Right ventricle myocardium superior (tissue), 1 donor: ENCODE measurements at regions of chr5 and their contacts with region 1.

Region 1: GRCh38 chr5:157718519-157718918 is 12.7 kb upstream of the THG1L start:
- DNase-seq: no peak
- ATAC-seq: peak; percentile 98

Region 2: GRCh38 chr5:157431544-157432200 is 286.8 kb before region 1 on chr5:
- intact Hi-C with region 1: loop called (anchors 5 kb)
- DNase-seq: no peak
- ATAC-seq: peak; percentile 85

Region 3: DNA sequence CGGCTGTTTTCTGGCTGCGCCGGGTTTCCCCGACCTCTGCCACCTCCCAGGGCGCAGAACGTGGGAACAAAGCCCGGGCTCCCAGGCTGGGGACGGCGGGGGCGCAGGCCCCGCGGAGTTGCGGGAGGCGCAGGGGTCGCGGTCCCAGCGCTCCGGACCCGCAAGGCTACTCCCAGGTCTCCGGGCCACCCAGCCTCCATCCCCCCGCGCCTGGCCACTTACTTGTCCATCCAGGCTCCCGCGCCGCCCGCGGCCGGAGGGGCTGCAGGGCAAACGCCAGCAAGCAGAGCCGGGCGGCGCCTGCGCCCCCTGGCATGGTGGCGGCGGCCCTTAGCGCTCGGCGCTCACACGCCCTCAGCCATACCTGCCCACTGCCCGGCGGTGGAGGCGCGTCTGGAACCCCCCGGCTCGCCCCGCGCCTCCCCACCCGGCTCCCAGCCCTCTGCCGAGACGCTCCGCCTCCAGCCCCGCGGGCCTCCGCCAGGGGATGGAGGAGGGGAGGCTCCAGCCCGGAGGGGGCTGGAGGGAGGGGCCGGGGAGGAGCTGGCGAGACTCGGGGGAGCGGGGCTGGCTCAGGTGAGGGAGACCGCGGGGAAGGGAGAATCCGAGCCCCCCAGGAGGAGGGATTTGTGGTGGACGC is 143.0 kb before region 1 on chr5 and contains the start of gene ADAM19:
- intact Hi-C with region 1: loop called (anchors 10 kb)
- DNase-seq: peak; percentile 71
- ATAC-seq: peak; percentile 92
- total RNA-seq, gene ADAM19: 8.4 TPM